Activated CD4-positive, alpha-beta T cell treated with anti-CD3 and anti-CD28 coated beads for 36 hours (primary cell): ENCODE measurements at regions of chr5 and their contacts with region 1.

Region 1: DNA sequence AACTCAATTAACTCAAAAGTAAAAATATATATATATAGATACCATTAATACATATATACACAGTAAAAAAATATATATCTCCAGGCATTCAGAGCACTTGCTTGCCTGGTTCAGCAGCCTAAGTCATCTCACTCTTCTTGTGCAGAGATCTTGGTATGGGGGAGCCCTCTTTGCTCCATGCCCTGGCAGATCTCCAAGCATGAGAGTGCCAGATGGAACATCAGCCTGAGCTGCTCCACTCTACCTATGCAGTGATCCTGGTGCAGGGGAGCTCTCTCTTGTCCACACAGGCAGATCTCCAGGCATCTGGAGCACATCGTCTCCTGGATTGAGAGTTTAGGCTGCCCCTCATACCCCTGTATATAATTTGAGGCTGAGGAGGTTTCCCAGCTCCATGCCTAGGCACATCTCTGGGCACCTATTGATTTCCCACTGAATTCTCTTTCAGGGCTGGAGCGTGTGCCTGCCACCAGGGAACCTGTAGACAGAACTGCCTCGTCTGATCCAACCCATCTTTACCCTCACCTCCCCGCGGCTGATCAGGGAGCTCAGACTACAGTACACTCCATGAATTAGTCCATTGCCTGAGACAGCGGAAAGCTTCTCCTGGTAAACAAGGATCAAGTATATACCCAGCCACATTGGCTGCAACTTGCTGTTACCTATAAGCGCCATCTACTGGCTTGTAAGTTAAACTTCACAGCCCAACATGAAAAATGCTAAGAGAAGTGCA is 342.4 kb upstream of the GRIA1 start:
- DNase-seq: no peak
- ATAC-seq: no peak
- H3K4me3 Mint-ChIP-seq: no peak overlapping the region
- H3K27ac Mint-ChIP-seq: no peak overlapping the region
- H3K4me1 Mint-ChIP-seq: no peaks in the 10 kb centered on the region
- H3K27me3 Mint-ChIP-seq: no peaks in the 10 kb centered on the region

Region 2: GRCh38 chr5:152560512-152561137 is 587.4 kb before region 1 on chr5:
- CTCF ChIA-PET with region 1: no interaction called
- POLR2A ChIA-PET with region 1: no interaction called
- intact Hi-C with region 1: loop called in 1 of 2 experiments (anchors 1 kb)
- DNase-seq: peak; percentile 66
- ATAC-seq: no peak
- H3K4me3 Mint-ChIP-seq: no peak overlapping the region
- H3K27ac Mint-ChIP-seq: no peak overlapping the region
- H3K4me1 Mint-ChIP-seq: no peaks in the 10 kb centered on the region
- H3K27me3 Mint-ChIP-seq: no peaks in the 10 kb centered on the region

Region 3: GRCh38 chr5:153211076-153211475 is 63.0 kb after region 1 on chr5:
- CTCF ChIA-PET with region 1: no interaction called
- POLR2A ChIA-PET with region 1: no interaction called
- intact Hi-C with region 1: no loop called
- DNase-seq: no peak
- ATAC-seq: no peak
- H3K4me3 Mint-ChIP-seq: no peak overlapping the region
- H3K27ac Mint-ChIP-seq: no peak overlapping the region
- H3K4me1 Mint-ChIP-seq: no peaks in the 10 kb centered on the region
- H3K27me3 Mint-ChIP-seq: no peaks in the 10 kb centered on the region

Region 4: GRCh38 chr5:153523831-153524230 is 375.8 kb after region 1 on chr5:
- CTCF ChIA-PET with region 1: no interaction called
- POLR2A ChIA-PET with region 1: no interaction called
- intact Hi-C with region 1: no loop called
- DNase-seq: no peak
- ATAC-seq: no peak
- H3K4me3 Mint-ChIP-seq: no peak overlapping the region
- H3K27ac Mint-ChIP-seq: no peak overlapping the region
- H3K4me1 Mint-ChIP-seq: no peaks in the 10 kb centered on the region
- H3K27me3 Mint-ChIP-seq: no peaks in the 10 kb centered on the region